Activated B cell treated with CpG ODN at 0.5 μM for 24 hours (primary cell): ENCODE measurements at regions of chr16 and their contacts with region 1.

Region 1: DNA sequence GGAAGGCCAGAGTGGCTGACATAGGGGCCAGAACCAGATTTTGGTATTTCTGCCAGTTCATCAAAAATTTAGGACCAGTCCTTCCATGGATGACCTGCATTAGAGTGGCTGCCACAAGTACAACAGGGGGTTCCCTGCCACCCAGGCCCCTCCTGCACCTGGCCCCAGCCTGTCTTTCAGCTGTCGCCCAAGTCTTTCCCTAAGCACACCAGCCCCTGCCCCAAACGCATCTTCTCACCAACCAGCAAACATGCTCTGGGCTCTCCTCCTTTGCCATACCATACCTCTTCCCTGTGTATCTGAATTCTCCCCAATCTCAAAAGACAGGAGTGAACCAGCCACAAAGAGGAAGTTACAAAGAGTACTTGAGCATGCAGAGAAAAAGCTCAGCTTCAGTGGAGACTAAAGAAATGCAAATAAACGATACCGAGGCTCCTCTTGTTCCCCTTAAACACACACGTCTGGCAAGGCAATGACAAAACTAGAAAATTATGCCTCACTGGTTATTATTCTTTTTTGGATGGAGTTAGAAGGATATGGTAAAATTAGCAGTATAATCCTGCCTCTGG is 130.6 kb downstream of the DYNLRB2 start:
- DNase-seq: no peak
- ATAC-seq: peak; percentile 64
- H3K4me3 Mint-ChIP-seq: peak overlapping the region; percentile 67
- H3K27ac Mint-ChIP-seq: peak overlapping the region; percentile 75
- H3K4me1 Mint-ChIP-seq: peaks cover 57% of the 10 kb centered on the region
- H3K27me3 Mint-ChIP-seq: peaks cover 10% of the 10 kb centered on the region
- CTCF ChIP-seq: no peak

Region 2: DNA sequence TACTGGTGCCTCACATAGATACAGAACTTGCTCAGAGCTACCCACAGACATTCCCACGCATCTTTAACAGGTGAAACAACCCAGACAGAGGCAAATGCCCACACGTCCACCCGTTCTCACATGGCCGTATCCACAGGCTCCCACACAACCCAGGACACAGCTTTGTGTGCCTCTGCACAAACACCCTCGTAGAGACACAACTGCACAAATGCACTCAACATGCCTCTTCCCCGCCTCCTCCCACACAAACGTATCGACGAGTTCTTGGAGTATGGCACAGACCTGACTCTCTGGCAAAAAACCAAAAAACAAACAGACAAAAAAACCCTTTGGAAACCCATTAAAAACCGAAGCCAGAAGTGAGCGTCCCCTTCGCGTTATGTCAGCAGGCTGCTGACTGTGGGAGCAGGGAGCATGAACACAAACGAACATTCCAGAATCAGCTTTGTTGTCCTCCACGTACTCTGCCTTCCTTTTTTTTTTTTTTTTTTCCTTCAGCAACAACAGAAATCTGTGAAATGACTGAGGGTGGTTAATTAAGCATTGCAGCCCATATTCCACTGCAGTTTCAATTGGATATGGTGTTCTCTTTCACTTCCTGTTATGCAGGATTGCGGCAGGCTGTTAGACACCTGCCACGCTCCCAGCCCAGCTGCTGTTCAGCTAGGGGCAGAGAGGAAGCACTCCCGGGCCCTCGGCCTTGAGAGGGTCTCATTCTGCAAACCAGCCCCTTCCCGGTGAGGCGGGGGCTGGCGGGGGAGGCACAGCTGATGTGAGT is 1384.5 kb before region 1 on chr16:
- CTCF ChIA-PET with region 1: no interaction called
- POLR2A ChIA-PET with region 1: no interaction called
- intact Hi-C with region 1: loop called (anchors 10 kb)
- DNase-seq: peak; percentile 37
- ATAC-seq: peak; percentile 88
- H3K4me3 Mint-ChIP-seq: peak overlapping the region; percentile 29
- H3K27ac Mint-ChIP-seq: no peak overlapping the region
- H3K4me1 Mint-ChIP-seq: peaks cover 28% of the 10 kb centered on the region
- H3K27me3 Mint-ChIP-seq: peaks cover 53% of the 10 kb centered on the region
- CTCF ChIP-seq: no peak

Region 3: DNA sequence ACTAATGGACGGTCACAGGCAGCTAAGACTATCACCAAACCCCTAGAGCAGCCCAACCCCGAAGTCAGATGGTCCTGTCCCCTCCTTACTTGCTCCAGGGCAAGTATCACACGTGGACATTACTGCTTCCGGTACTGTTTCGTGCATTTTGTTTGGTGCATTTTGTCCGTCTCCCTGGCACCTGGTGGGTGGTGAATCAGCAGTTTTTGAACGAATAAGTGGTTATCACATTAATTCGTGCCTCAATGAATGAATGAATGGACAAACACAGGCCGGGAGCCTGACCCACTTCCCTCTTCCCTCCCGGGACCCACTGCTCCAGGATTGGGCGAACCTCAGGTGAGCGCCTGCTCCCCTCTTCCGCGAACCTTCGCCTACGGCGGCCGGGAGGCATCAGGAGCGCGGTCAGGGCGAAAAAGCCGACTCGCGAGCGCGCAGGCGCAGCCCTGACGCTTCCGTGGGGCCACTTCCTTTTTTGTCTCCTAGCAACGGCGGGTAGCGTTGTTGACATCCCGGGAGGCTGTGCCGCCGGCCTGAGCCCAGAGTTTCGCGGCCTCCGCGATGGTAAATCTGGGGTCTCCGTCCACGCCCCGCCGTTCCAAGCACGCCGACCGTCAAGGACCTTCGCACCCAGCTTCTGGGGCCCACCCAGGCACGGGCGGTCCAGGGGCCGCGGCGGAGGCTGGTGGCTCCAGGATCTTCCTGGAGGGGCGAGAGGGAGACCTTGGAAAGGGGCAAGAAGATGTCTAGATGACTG is 130.7 kb before region 1 on chr16 and contains the start of gene DYNLRB2:
- CTCF ChIA-PET with region 1: no interaction called
- POLR2A ChIA-PET with region 1: no interaction called
- intact Hi-C with region 1: loop called (anchors 1 kb)
- DNase-seq: peak; percentile 90
- ATAC-seq: peak; percentile 92
- H3K4me3 Mint-ChIP-seq: peak within 1 kb of the TSS; percentile 96
- H3K27ac Mint-ChIP-seq: peak within 1 kb of the TSS; percentile 96
- H3K4me1 Mint-ChIP-seq: peaks cover 16% of the 10 kb centered on the region
- H3K27me3 Mint-ChIP-seq: peaks cover 7% of the 10 kb centered on the region
- CTCF ChIP-seq: no peak
- total RNA-seq, gene DYNLRB2: 0.71 TPM in 1 of 2 replicates, not detected in the other

Region 4: GRCh38 chr16:80656711-80657150 is 14.6 kb before region 1 on chr16:
- CTCF ChIA-PET with region 1: no interaction called
- POLR2A ChIA-PET with region 1: no interaction called
- intact Hi-C with region 1: loop called (anchors 2 kb)
- DNase-seq: no peak
- ATAC-seq: peak; percentile 34
- H3K4me3 Mint-ChIP-seq: peak overlapping the region; percentile 72
- H3K27ac Mint-ChIP-seq: peak overlapping the region; percentile 26
- H3K4me1 Mint-ChIP-seq: peaks cover 12% of the 10 kb centered on the region
- H3K27me3 Mint-ChIP-seq: no peaks in the 10 kb centered on the region
- CTCF ChIP-seq: no peak

Region 5: GRCh38 chr16:80894091-80894490 is 222.7 kb after region 1 on chr16:
- CTCF ChIA-PET with region 1: no interaction called
- POLR2A ChIA-PET with region 1: no interaction called
- intact Hi-C with region 1: loop called (anchors 5 kb)
- DNase-seq: no peak
- ATAC-seq: no peak
- H3K4me3 Mint-ChIP-seq: no peak overlapping the region
- H3K27ac Mint-ChIP-seq: no peak overlapping the region
- H3K4me1 Mint-ChIP-seq: peaks cover 20% of the 10 kb centered on the region
- H3K27me3 Mint-ChIP-seq: no peaks in the 10 kb centered on the region
- CTCF ChIP-seq: no peak

Region 6: DNA sequence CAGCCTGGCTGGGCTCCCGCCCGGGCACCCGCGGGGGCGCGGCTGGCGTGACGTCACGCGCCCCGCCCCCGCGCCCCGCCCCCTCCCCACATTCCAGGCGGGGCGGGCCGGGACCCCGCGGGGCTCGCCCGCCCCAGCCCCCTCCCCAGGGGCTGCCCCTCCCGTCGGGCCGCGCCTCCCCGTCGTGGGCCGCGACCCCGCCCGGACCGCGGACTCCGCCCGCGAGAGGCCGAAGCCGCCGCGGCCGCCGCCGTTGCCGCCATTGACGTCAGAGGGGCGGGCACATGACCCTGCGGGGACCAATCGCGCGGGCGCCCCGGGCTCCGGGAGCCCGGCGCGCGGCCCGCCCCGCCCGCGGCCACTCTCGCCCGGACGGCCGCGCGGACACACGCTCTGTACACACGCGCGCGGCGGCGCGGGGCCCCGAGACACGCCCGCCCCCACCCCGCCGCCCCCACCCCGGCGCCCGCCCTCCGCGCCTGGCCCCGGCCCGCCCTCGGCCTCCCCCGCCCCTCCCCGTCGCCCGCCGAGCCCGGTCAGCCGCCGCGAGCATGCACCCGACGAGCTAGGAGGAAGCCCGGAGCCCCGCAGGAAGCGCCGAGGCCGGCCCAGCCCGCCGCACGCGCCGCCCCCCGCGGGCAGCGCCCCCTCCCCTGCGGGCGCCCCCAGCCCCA is 773.2 kb after region 1 on chr16 and contains the start of gene CMIP:
- CTCF ChIA-PET with region 1: no interaction called
- POLR2A ChIA-PET with region 1: no interaction called
- intact Hi-C with region 1: no loop called
- DNase-seq: peak; percentile 88
- ATAC-seq: peak; percentile 82
- H3K4me3 Mint-ChIP-seq: peak within 1 kb of the TSS; percentile 87
- H3K27ac Mint-ChIP-seq: peak within 1 kb of the TSS; percentile 79
- H3K4me1 Mint-ChIP-seq: peaks cover 43% of the 10 kb centered on the region
- H3K27me3 Mint-ChIP-seq: no peaks in the 10 kb centered on the region
- CTCF ChIP-seq: no peak
- total RNA-seq, gene CMIP: 62.4 and 76.3 TPM in 2 replicates